PC-3 (cell line): ENCODE measurements at regions of chr3 and their contacts with region 1.

Region 1: GRCh38 chr3:176795891-176796290 is 401.4 kb downstream of the TBL1XR1 start:
- DNase-seq: no peak
- ATAC-seq: no peak
- H3K4me3 ChIP-seq: no peak overlapping the region
- H3K27ac ChIP-seq: no peak overlapping the region
- H3K4me1 ChIP-seq: no peaks in the 10 kb centered on the region
- H3K27me3 ChIP-seq: no peaks in the 10 kb centered on the region
- CTCF ChIP-seq: no peak

Region 2: GRCh38 chr3:176699288-176699687 is 96.6 kb before region 1 on chr3:
- CTCF ChIA-PET with region 1: interaction called, 18 read pairs
- POLR2A ChIA-PET with region 1: no interaction called
- intact Hi-C with region 1: no loop called
- DNase-seq: no peak
- ATAC-seq: no peak
- H3K4me3 ChIP-seq: no peak overlapping the region
- H3K27ac ChIP-seq: no peak overlapping the region
- H3K4me1 ChIP-seq: no peaks in the 10 kb centered on the region
- H3K27me3 ChIP-seq: 0 out of 2 replicates have a peak, but pooled peaks cover 3% of the 10 kb centered on the region
- CTCF ChIP-seq: no peak

Region 3: DNA sequence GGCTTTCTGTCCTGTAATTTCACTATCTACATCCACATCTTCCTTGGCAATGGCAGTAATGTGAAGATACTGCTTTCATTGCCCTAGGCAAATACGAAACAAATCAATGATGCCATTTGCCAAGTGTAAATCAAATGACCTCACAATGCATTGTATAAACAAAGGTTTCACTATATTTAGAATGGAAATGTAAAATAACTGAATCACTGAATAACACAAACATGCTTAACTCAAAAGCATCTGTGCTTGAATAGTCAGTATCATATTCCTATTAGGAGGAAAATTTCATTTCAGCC is 54.2 kb before region 1 on chr3:
- CTCF ChIA-PET with region 1: no interaction called
- POLR2A ChIA-PET with region 1: no interaction called
- intact Hi-C with region 1: loop called (anchors 5 kb)
- DNase-seq: no peak
- ATAC-seq: no peak
- H3K4me3 ChIP-seq: no peak overlapping the region
- H3K27ac ChIP-seq: no peak overlapping the region
- H3K4me1 ChIP-seq: no peaks in the 10 kb centered on the region
- H3K27me3 ChIP-seq: peaks cover 8% of the 10 kb centered on the region; the same call in 1 of the 2 replicates
- CTCF ChIP-seq: no peak